A673 (cell line): ENCODE measurements at regions of chr3 and their contacts with region 1.

Region 1: GRCh38 chr3:120182724-120183524 is 88.7 kb upstream of the GSK3B start:
- DNase-seq: peak; percentile 27
- H3K4me3 ChIP-seq: no peak overlapping the region
- H3K27ac ChIP-seq: no peak overlapping the region
- H3K4me1 ChIP-seq: no peaks in the 10 kb centered on the region
- H3K27me3 ChIP-seq: no peaks in the 10 kb centered on the region
- CTCF ChIP-seq: peak; percentile 50; the same call in 1 of the 2 replicates

Region 2: DNA sequence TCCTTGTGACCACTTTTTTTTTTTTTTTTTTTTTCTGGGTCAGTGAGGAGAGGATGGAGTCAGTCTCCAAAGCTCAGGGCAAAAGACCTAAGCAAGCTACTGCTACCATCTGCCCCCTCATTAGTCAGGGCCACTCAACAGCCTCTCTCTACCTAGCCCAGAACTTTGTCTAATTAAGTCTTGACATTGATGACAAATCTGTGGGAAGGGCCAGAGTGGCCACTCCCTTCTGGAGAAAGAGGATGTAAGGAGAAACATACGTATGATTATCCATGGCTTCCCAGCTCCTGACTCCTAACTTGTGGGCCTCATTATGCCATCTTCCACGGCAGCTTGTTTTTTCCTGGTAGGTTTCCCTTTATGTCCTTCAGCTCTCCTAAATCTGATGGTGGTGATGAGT is 363.1 kb before region 1 on chr3:
- CTCF ChIA-PET with region 1: no interaction called
- POLR2A ChIA-PET with region 1: no interaction called
- intact Hi-C with region 1: loop called (anchors 5 kb)
- DNase-seq: no peak
- H3K4me3 ChIP-seq: no peak overlapping the region
- H3K27ac ChIP-seq: no peak overlapping the region
- H3K4me1 ChIP-seq: no peaks in the 10 kb centered on the region
- H3K27me3 ChIP-seq: no peaks in the 10 kb centered on the region
- CTCF ChIP-seq: no peak

Region 3: DNA sequence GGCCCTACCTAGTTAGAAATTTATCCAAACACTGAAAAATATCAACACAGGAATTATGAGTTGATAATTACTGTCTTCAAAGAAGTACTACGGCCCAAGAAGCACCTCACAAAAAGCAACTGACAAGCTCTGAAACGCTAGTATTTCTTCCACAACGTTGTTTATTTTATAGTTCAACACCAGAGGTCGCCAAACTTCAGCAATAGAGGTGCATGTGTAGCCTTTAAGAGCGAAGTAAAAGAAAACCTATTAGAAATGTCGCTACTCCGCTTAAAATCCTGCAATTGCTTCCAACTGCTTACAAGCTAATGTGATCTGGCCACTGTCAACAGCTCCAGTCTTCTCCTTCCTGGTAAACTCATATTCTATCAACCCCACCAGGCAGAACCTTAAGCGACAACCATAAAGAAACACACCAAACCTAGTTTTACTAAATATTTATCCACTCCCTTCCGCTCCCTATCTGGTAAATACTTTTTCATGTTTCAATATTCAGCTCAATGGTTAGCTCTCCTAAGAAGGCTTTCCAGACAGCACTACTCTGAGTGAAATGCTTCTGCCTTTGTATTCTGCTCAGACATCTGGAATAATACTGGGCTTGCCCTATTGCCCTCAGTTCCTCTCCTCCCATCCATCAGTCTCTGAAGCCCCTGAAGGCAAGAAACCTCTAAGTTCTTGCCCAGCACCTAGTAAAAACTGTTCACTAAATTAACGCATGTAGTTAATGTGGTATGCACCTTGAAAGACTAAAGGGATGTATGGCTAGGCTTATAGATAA is 290.8 kb before region 1 on chr3:
- CTCF ChIA-PET with region 1: no interaction called
- POLR2A ChIA-PET with region 1: no interaction called
- intact Hi-C with region 1: loop called (anchors 5 kb)
- DNase-seq: peak; percentile 83
- H3K4me3 ChIP-seq: no peak overlapping the region
- H3K27ac ChIP-seq: no peak overlapping the region
- H3K4me1 ChIP-seq: no peaks in the 10 kb centered on the region
- H3K27me3 ChIP-seq: no peaks in the 10 kb centered on the region
- CTCF ChIP-seq: peak; percentile 78

Region 4: DNA sequence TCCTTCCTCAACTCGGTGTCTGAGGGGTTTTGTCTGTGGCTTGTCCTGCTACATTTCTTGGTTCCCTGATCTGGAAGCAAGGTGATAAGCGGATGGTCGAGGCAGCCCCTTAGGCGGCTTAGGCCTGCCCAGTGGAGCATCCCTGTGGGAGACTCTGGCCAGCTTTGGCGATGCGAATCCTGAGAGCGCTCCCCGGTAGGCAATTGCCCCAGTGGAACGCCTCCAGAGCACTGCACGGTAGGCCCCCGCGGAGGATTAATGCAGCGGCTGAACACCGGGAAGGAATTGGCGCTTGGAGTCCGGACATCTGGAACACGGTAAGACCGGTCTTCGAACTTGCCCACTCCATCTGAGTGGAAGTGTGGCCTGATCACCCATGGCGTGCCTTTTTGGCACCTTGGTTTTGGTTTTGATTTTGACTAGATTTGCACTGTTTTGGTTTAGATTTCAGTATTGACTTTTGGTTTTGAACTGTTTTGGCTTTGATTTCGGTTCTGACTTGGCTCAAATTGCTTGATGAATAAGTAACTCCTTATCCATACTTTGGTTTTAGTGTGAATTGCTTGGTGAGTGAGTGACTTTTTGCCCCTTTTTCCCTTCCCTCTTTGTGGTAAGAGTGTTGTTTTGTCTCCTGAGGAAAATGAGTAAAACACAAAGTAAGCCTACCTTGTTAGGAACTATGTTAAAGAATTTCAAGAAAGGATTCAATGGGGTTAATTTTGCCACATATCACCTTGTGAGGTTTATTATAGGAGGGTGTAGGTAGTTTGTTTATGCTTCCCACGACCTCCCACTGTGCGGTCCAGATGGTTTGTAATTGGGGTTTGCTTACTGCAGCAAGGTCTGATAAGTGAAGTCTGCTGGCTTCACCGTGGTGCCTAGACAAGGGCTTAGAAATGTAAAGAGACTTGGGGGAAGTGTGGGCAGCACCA is 129.2 kb after region 1 on chr3:
- CTCF ChIA-PET with region 1: no interaction called
- POLR2A ChIA-PET with region 1: no interaction called
- intact Hi-C with region 1: no loop called
- DNase-seq: no peak
- H3K4me3 ChIP-seq: no peak overlapping the region
- H3K27ac ChIP-seq: no peak overlapping the region
- H3K4me1 ChIP-seq: no peaks in the 10 kb centered on the region
- H3K27me3 ChIP-seq: no peaks in the 10 kb centered on the region
- CTCF ChIP-seq: no peak

Region 5: GRCh38 chr3:120688121-120688520 is 505.2 kb after region 1 on chr3:
- CTCF ChIA-PET with region 1: no interaction called
- POLR2A ChIA-PET with region 1: no interaction called
- intact Hi-C with region 1: no loop called
- DNase-seq: no peak
- H3K4me3 ChIP-seq: no peak overlapping the region
- H3K27ac ChIP-seq: no peak overlapping the region
- H3K4me1 ChIP-seq: peaks cover 1% of the 10 kb centered on the region
- H3K27me3 ChIP-seq: no peaks in the 10 kb centered on the region
- CTCF ChIP-seq: no peak

Region 6: DNA sequence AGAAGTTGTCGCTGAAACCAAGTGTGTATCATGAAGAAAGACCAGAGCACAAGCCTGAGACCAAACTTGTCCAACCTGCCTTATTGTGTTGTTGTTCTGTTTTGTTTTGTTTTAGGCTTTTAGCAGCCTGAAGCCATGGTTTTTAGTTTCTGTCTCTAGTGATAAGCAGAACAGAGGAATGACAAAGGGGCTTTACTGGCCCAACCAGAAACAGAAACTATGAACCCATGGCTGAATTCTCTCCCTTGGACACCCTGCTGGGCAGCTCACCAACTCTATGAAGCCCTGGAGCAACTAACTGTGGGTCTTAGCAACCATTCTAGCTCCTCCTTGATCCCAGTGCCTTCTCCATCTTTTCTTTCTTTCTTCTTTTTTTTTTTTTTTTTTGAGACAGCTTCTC is 1447.4 kb after region 1 on chr3:
- CTCF ChIA-PET with region 1: no interaction called
- POLR2A ChIA-PET with region 1: no interaction called
- intact Hi-C with region 1: loop called (anchors 5 kb)
- DNase-seq: no peak
- H3K4me3 ChIP-seq: no peak overlapping the region
- H3K27ac ChIP-seq: no peak overlapping the region
- H3K4me1 ChIP-seq: no peaks in the 10 kb centered on the region
- H3K27me3 ChIP-seq: no peaks in the 10 kb centered on the region
- CTCF ChIP-seq: no peak